HepG2 (cell line): ENCODE measurements at regions of chr5 and their contacts with region 1.

Region 1: GRCh38 chr5:122492664-122493063 is 180.6 kb downstream of the SNCAIP start:
- DNase-seq: no peak
- ATAC-seq: peak; percentile 60
- H3K4me3 ChIP-seq: no peak overlapping the region
- H3K27ac ChIP-seq: no peak overlapping the region
- H3K4me1 ChIP-seq: no peaks in the 10 kb centered on the region
- H3K27me3 ChIP-seq: no peaks in the 10 kb centered on the region
- CTCF ChIP-seq: 0 out of 2 replicates have a peak, but pooled peaks have one; percentile 21
- EP300 ChIP-seq: no peak
- POLR2A ChIP-seq: no peak
- RAD21 ChIP-seq: no peak

Region 2: GRCh38 chr5:122192497-122193496 is 299.9 kb before region 1 on chr5:
- CTCF ChIA-PET with region 1: no interaction called
- POLR2A ChIA-PET with region 1: no interaction called
- in situ Hi-C with region 1: no loop called
- intact Hi-C with region 1: loop called (anchors 5 kb)
- DNase-seq: peak; percentile 44
- ATAC-seq: peak; percentile 87
- H3K4me3 ChIP-seq: no peak overlapping the region
- H3K27ac ChIP-seq: no peak overlapping the region
- H3K4me1 ChIP-seq: no peaks in the 10 kb centered on the region
- H3K27me3 ChIP-seq: no peaks in the 10 kb centered on the region; a peak in 1 of 5 replicates
- CTCF ChIP-seq: peak; percentile 60
- EP300 ChIP-seq: no peak
- POLR2A ChIP-seq: no peak
- RAD21 ChIP-seq: no peak